ENCODE measurements at regions of chr11 and their contacts with region 1.

Region 1: GRCh38 chr11:10293423-10294289 is at the start of gene SBF2:
- DNase-seq: peak; percentile 93
- total RNA-seq, gene SBF2: 27.9 TPM

Region 2: GRCh38 chr11:9573052-9573774 is 720.4 kb before region 1 on chr11 and contains the start of gene WEE1:
- intact Hi-C with region 1: loop called (anchors 10 kb)
- DNase-seq: peak; percentile 99
- total RNA-seq, gene WEE1: 95.1 TPM

Region 3: GRCh38 chr11:9982800-9983579 is 310.7 kb before region 1 on chr11:
- intact Hi-C with region 1: no loop called
- DNase-seq: no peak

Region 4: GRCh38 chr11:10005955-10006525 is 287.6 kb before region 1 on chr11:
- intact Hi-C with region 1: no loop called
- DNase-seq: no peak

Region 5: DNA sequence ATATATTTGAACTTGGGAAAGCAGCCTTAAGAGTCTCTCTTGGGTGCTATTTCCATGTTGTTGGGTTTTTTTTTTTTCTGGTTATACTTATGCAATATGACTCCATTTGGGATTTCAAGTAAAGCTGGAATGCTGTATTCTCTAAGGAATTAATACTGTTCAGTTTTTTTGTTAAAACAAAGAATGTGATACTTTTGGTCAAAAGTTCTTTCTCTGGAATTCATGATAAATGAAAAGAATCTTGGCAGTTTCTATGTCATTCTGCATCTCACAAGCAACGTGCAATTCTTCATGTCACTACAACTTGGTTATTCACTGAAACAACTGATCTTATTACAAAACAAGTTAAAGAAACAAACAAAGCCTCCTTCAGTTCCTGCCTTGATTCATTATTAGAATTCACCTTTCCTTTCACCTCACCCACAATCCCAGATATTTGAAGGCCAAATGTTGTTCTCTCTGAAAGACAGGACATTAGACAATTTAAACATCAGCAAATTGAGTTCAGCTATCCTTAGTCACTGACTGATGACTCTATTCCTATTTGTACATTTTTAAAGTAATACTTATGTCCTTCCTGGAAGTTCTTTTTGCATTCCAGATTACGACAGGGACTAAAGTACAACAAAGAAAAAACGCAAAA is 175.8 kb before region 1 on chr11:
- intact Hi-C with region 1: loop called (anchors 5 kb)
- DNase-seq: no peak

Region 6: DNA sequence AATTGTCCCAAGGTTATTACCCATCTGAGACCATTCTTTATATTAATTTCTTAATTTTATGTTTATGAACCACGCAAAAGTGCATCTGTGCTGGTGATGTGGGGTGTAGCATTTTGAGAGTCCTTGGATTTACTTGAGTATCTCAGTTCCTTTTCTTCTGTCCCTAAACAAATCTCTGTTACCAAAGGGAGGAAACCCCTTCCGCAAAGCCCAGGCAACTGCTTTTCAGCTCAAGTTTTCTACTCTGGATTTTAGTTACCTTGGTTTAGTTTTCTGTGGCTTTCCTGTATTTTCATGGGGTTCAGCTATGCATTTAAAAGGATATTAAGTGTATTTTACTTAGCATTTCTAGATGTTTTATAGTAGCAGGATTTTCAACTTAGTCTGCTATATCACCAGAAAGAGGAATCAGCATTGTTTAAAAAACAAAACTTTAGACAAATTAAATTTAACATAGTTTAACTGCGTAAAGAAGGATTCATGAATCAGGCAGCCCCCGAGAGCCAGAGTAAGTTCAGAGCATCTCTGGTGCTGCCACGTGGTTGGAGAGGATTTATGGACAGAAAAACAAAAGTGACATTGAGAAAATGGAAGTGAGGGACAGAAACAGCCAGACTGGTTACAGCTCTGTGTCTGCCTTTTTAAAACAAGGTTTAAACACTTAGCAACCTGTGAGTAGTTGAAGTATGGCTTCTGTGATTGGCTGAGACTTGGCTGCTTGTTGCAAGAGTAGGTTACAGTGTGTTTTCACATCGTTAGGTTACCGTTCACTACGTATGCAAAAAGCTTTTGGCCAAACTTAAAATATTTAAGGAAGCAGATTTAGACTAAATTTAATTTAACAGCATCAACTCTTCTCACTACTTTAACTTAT is 20.8 kb after region 1 on chr11:
- intact Hi-C with region 1: no loop called
- DNase-seq: no peak